Dorsolateral prefrontal cortex (tissue), 120 donors: ENCODE measurements at regions of chr17 and their contacts with region 1.

Region 1: GRCh38 chr17:78933025-78933958 is 8.1 kb upstream of the TIMP2 start:
- DNase-seq: no peak
- H3K4me3 ChIP-seq: peak overlapping the region in 43 of 59 donors; percentile 3 to 63 (median 44)
- H3K27ac ChIP-seq: peak overlapping the region; percentile 44 to 94 (median 83)
- H3K27me3 ChIP-seq: no peaks in the 10 kb centered on the region
- CTCF ChIP-seq: no peak

Region 2: DNA sequence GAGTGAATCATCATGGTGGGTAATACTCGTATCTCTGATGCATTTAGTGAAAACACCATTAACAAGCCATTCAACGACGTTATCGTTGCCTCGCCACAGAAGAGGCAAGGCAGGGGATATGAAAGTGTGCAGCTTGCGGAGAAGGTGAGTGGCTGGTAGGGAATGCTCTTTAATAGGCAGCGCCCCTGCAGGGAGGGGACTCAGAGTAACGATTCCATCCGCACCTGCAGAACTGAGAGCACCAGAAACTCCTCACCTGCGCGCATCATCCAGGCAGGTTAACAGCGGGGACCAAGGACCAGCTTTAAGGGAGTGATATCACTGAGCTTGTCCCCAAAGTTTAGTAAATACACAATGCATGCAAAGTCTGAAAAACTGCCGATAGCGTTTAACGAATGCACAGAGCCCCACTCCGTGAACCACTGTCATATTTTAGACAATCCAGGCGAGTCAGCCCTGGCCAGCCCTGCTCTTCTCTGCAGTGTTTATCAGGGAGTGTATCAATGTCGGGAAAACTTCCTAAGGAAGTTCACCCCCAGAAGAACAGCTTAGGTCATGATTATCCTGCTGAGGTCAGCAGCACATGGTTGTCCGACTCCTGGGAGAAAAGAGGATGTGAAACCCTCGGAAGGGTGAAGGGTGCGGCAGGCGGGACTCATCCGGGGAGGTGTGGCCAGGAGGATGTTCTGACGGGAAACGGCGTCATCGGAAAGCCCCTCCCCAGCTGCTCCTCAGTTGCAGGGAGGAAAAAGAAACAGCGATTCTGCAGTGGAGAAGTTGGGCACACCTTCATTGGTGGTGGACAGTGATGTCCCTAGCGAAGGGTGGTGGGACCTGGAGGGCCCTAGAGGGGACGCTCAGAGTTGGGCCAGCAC is 287.6 kb before region 1 on chr17:
- intact Hi-C with region 1: no loop called
- DNase-seq: peak in 6 of 10 donors; percentile 30 to 57 (median 42)
- H3K4me3 ChIP-seq: no peak overlapping the region
- H3K27ac ChIP-seq: peak overlapping the region in 29 of 59 donors; percentile 21 to 80 (median 45)
- H3K27me3 ChIP-seq: no peaks in the 10 kb centered on the region
- CTCF ChIP-seq: no peak

Region 3: DNA sequence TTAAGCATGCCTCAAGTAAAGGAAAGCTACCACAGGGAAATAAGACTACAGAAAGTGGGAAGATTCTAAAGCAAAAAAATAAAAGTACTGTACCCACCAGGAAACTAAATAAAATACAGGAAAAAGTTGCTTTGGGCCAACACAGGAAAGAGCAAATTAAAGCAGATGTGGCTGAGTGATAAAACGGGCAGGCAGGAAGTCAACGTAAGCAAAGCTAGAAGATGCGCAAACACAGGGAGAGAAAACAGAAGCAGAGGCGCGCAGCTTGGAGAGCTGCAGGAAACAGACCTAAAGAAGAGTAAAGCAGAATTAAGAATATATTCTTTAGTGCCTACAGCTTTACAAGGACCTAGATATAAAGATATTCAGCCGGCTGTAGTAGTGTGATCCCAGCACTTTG is 114.4 kb before region 1 on chr17:
- intact Hi-C with region 1: no loop called
- DNase-seq: no peak
- H3K4me3 ChIP-seq: no peak overlapping the region
- H3K27ac ChIP-seq: peak overlapping the region in 17 of 59 donors; percentile 3 to 55 (median 26)
- H3K27me3 ChIP-seq: no peaks in the 10 kb centered on the region
- CTCF ChIP-seq: no peak

Region 4: DNA sequence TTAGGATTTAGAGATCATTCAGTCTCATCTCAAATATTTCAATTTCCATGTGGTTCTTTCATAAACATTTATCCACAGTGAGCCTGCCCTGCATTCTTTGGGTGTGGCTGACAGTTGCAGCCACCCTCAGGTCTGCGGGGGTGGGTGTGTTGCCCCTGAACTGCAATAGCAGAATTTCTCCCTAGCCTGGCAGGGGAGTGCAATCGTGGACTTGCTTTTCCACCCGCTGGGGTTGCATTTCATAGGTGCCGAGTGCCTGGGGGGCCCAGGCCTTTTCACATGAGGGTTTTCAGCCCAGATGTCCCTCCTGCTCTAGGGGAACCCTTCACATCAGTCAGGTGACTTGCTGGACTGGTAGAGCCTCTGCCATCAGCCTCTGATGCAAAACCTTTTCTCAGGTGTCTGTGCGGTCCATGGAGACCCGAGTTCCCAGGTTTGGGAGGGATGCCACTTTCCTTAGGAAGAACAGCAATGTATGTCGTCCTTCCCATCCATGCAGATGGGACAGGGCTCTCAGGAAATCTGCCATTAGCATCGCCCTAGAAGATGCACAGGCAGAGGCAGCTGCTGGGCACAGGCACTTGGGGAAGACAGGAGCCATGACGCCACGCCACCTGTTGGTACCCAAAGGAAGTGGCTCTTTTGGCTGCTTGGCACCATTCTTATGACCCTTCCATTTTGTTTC is 90.3 kb before region 1 on chr17:
- intact Hi-C with region 1: no loop called
- DNase-seq: no peak
- H3K4me3 ChIP-seq: no peak overlapping the region
- H3K27ac ChIP-seq: peak overlapping the region in 14 of 59 donors; percentile 1 to 93 (median 82)
- H3K27me3 ChIP-seq: no peaks in the 10 kb centered on the region
- CTCF ChIP-seq: peak in 31 of 56 donors; percentile 11 to 42 (median 24)

Region 5: GRCh38 chr17:78899361-78900260 is 33.7 kb before region 1 on chr17:
- intact Hi-C with region 1: loop called in 1 of 2 experiments (anchors 5 kb)
- DNase-seq: peak in 6 of 10 donors; percentile 36 to 74 (median 62)
- H3K4me3 ChIP-seq: peak overlapping the region in 2 of 59 donors; percentile 5 to 14
- H3K27ac ChIP-seq: peak overlapping the region; percentile 20 to 100 (median 88)
- H3K27me3 ChIP-seq: no peaks in the 10 kb centered on the region
- CTCF ChIP-seq: peak in 1 of 56 donors; percentile 16

Region 6: DNA sequence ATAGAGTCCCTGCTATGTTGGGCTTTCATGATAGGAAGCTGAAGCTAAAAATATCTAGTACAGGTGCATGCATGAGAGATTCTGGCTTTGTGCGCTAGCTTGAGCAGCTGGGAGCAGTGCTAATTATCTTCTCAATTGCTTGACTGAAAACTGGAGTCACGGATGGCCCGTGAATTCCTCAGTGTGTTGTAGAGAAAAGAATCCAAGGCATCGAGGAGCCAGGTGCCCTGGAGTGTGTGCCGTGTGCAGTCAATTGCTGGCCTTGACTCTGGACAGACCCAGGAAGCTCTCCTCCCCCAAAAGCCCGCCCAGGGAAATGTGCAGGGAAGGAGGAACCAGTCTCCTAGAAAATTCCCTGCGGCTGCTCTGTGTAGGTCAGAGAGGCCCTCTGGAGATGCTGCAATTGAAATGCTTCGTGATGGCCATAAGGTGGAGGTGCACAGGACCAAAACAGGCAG is 32.2 kb after region 1 on chr17:
- intact Hi-C with region 1: loop called in 1 of 2 experiments (anchors 5 kb)
- DNase-seq: peak in 1 of 10 donors; percentile 40
- H3K4me3 ChIP-seq: no peak overlapping the region
- H3K27ac ChIP-seq: peak overlapping the region in 3 of 59 donors; percentile 6 to 33 (median 6)
- H3K27me3 ChIP-seq: no peaks in the 10 kb centered on the region
- CTCF ChIP-seq: no peak